Activated naive CD8-positive, alpha-beta T cell treated with anti-CD3 and anti-CD28 coated beads, Interleukin-2, amount 10 ng/mL, durations not matched to agents 7 days and 5 days (primary cell): ENCODE measurements at regions of chr6 and their contacts with region 1.

Region 1: DNA sequence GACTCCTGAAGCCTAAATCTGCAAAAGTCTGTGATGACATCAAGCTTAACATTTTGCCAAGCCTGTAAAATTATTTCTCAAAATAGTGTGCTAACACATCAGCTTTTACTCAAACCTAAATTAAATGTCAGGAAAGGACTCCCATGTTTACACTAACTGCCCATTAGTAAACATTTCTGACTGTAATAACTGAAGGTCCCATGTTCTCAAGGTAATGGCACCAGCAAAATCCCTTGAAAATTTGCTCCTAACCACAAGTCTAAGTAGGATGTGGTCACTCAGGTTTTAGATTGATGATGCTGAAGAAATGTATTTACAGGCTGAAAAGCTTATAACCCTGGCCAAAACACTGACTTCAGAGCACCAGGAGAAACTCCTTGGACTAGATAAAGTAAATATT is 33.0 kb downstream of the BACH2 start:
- DNase-seq: no peak
- ATAC-seq: peak; percentile 24
- H3K4me3 Mint-ChIP-seq: peak overlapping the region; percentile 56
- H3K27ac Mint-ChIP-seq: peak overlapping the region; percentile 77
- H3K4me1 Mint-ChIP-seq: peaks cover 87% of the 10 kb centered on the region
- H3K27me3 Mint-ChIP-seq: no peaks in the 10 kb centered on the region

Region 2: GRCh38 chr6:90230548-90231215 is 33.0 kb before region 1 on chr6:
- POLR2A ChIA-PET with region 1: interaction called, 10 read pairs
- DNase-seq: no peak
- ATAC-seq: no peak
- H3K4me3 Mint-ChIP-seq: peak overlapping the region; percentile 51
- H3K27ac Mint-ChIP-seq: peak overlapping the region; percentile 56
- H3K4me1 Mint-ChIP-seq: peaks cover 83% of the 10 kb centered on the region
- H3K27me3 Mint-ChIP-seq: no peaks in the 10 kb centered on the region

Region 3: DNA sequence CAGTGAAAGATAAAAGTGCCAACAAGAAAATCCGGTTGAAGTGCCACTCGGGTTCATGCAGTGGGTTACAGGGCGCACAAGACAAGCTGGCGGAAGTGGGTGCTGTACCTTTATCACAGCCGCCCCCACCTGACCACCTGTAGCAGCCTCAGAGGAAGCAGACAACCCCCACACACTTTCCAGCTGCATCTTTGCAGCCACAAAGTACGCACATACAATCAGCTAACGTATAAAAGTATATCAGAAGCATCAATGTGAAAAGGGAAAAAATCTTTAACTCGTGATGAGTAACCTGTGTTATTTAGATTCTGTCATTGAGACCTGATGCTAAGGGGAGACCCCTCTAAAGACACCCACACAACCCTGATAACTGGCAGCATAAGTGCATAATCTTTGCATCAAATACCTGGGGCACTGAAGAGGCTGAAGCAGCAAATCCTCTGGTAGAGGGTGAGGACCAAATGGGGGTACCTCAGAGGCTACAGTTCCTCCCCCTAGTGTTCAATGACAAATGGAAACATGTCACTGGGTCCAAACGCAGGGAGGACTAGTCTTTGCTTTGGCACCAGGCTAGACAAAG is 10.9 kb after region 1 on chr6:
- POLR2A ChIA-PET with region 1: interaction called, 11 read pairs
- DNase-seq: peak; percentile 76
- ATAC-seq: peak; percentile 81
- H3K4me3 Mint-ChIP-seq: peak overlapping the region; percentile 73
- H3K27ac Mint-ChIP-seq: peak overlapping the region; percentile 90
- H3K4me1 Mint-ChIP-seq: peaks cover 84% of the 10 kb centered on the region
- H3K27me3 Mint-ChIP-seq: no peaks in the 10 kb centered on the region

Region 4: DNA sequence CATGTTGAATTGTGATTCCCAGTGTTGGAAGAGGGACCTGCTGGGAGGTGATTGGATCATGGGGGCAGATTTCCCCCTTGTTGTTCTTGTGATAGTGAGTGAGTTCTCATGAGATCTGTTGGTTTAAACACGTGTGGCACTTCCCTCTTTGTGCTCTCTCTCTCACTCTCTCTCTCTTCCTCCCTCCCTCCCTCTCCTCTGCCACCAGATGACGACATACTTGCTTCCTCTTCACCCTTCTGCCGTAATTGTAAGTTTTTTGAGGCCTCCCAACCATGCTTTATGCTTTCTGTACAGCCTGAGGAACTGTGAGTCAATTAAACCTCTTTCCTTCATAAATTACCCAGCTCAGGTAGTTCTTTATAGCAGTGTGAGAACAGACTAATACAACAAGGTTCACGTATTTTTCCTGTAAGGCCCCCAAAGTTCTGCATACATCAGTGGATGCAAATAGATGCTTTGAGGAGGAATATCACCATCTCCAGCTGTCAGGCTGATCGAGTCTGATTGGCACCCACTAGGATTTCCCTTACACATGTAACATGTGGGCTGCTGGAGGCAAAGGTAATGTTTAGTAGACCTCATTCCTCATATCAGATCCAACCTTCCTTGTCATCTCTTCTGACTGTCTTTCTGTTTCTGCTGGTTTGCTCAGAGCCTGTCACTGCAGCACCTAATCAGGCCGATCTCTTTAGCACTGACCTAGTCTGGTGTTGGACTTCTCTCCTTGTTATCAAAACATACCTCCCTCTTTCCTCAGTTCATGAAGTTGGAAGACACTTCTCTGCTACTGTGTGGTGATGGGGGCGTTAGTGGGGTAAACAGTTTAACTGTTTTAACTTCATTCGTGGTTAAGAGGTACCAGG is 87.3 kb after region 1 on chr6:
- POLR2A ChIA-PET with region 1: no interaction called
- DNase-seq: no peak
- ATAC-seq: peak; percentile 93
- H3K4me3 Mint-ChIP-seq: peak overlapping the region; percentile 60
- H3K27ac Mint-ChIP-seq: peak overlapping the region; percentile 80
- H3K4me1 Mint-ChIP-seq: peaks cover 28% of the 10 kb centered on the region
- H3K27me3 Mint-ChIP-seq: no peaks in the 10 kb centered on the region